CD4-positive, alpha-beta T cell (primary cell): ENCODE measurements at regions of chr10 and their contacts with region 1.

Region 1: GRCh38 chr10:71957546-71958275 is 6.5 kb upstream of the CHST3 start:
- DNase-seq: no peak
- ATAC-seq: no peak
- H3K4me3 ChIP-seq: no peak overlapping the region
- H3K4me3 Mint-ChIP-seq: no peak overlapping the region
- H3K27ac ChIP-seq: no peak overlapping the region
- H3K27ac Mint-ChIP-seq: no peak overlapping the region
- H3K4me1 ChIP-seq: no peaks in the 10 kb centered on the region
- H3K4me1 Mint-ChIP-seq: no peaks in the 10 kb centered on the region
- H3K27me3 ChIP-seq: peaks cover 1 to 7% of the 10 kb centered on the region in 2 experiments
- H3K27me3 Mint-ChIP-seq: peaks cover 22% of the 10 kb centered on the region
- CTCF ChIP-seq: no peak

Region 2: GRCh38 chr10:71899665-71900412 is 57.9 kb before region 1 on chr10:
- CTCF ChIA-PET with region 1: interaction called, 3 read pairs
- POLR2A ChIA-PET with region 1: no interaction called
- intact Hi-C with region 1: loop called in 1 of 2 experiments (anchors 5 kb)
- DNase-seq: no peak
- ATAC-seq: no peak
- H3K4me3 ChIP-seq: no peak overlapping the region
- H3K4me3 Mint-ChIP-seq: no peak overlapping the region
- H3K27ac ChIP-seq: no peak overlapping the region
- H3K27ac Mint-ChIP-seq: no peak overlapping the region
- H3K4me1 ChIP-seq: peaks cover 6% of the 10 kb centered on the region
- H3K4me1 Mint-ChIP-seq: peaks cover 15% of the 10 kb centered on the region
- H3K27me3 ChIP-seq: no peaks in the 10 kb centered on the region
- H3K27me3 Mint-ChIP-seq: no peaks in the 10 kb centered on the region
- CTCF ChIP-seq: no peak